Activated CD4-positive, alpha-beta T cell treated with anti-CD3 and anti-CD28 coated beads, Interleukin-2, amount 10 ng/mL, durations not matched to agents 24 days and 14 days (primary cell): ENCODE measurements at regions of chr6 and their contacts with region 1.

Region 1: GRCh38 chr6:127812985-127813698 is 87.7 kb downstream of the THEMIS start:
- DNase-seq: no peak
- H3K4me3 Mint-ChIP-seq: no peak overlapping the region
- H3K27ac Mint-ChIP-seq: peak overlapping the region; percentile 23
- H3K4me1 Mint-ChIP-seq: peaks cover 38% of the 10 kb centered on the region
- H3K27me3 Mint-ChIP-seq: no peaks in the 10 kb centered on the region

Region 2: GRCh38 chr6:127471379-127472255 is 341.5 kb before region 1 on chr6:
- intact Hi-C with region 1: no loop called
- DNase-seq: no peak
- H3K4me3 Mint-ChIP-seq: no peak overlapping the region
- H3K27ac Mint-ChIP-seq: no peak overlapping the region
- H3K4me1 Mint-ChIP-seq: peaks cover 3% of the 10 kb centered on the region
- H3K27me3 Mint-ChIP-seq: no peaks in the 10 kb centered on the region

Region 3: GRCh38 chr6:127784468-127784867 is 28.7 kb before region 1 on chr6:
- intact Hi-C with region 1: loop called (anchors 5 kb)
- DNase-seq: no peak
- H3K4me3 Mint-ChIP-seq: no peak overlapping the region
- H3K27ac Mint-ChIP-seq: peak overlapping the region; percentile 77
- H3K4me1 Mint-ChIP-seq: peaks cover 28% of the 10 kb centered on the region
- H3K27me3 Mint-ChIP-seq: no peaks in the 10 kb centered on the region

Region 4: GRCh38 chr6:127841811-127842210 is 28.7 kb after region 1 on chr6:
- intact Hi-C with region 1: no loop called
- DNase-seq: no peak
- H3K4me3 Mint-ChIP-seq: no peak overlapping the region
- H3K27ac Mint-ChIP-seq: no peak overlapping the region
- H3K4me1 Mint-ChIP-seq: peaks cover 20% of the 10 kb centered on the region
- H3K27me3 Mint-ChIP-seq: no peaks in the 10 kb centered on the region